ENCODE measurements at regions of chr6 and their contacts with region 1.

Region 1: GRCh38 chr6:111651185-111652034 is 45.7 kb upstream of the TRAF3IP2 start:
- DNase-seq: peak; percentile 93 to 95
- ATAC-seq: peak; percentile 76 to 79
- H3K4me3 ChIP-seq: no peak overlapping the region
- H3K27ac ChIP-seq: peak overlapping the region; percentile 86 to 95 (median 90)
- H3K4me1 ChIP-seq: peaks cover 37 to 56% of the 10 kb centered on the region in 2 donors
- H3K27me3 ChIP-seq: no peaks in the 10 kb centered on the region
- CTCF ChIP-seq: no peak
- POLR2A ChIP-seq: peak; percentile 62 to 86

Region 2: DNA sequence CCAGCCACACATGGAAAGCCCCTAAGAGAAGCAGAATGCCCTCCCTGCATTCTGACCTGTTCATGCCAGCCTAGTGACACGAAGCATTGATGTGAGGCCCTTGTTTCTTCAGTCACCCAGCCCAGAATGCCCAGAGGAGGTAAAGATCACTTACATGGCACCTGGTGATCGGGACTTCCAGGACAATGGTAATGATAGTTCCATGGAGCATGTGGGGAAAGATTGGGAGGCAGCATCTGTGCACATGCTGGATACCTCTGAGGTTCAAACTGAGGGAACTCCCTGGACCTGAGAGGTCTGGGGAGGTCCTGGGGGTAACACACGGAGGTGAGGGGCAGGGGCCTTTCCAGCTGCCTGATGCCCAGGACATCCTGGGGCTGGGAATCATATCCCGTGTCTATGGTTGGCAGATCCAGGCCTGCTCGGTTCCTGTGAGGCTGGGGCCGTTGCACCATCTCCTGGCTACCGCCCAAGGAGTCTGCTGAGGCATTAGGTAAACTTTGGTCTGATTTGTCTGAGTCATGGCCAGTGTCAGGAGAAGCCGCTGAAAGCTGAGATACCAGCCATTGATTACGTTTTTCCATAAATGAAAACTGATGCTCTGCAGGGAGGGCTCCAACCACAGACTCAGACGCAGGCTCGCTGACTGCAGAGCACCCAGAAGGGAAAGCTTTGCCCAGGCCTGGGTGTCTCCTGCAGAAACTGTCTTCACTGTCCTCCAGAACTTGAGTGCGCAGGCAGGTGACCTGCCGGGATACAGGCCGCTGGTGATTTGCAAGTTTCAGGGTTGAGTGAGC is 60.1 kb before region 1 on chr6:
- in situ Hi-C with region 1: no loop called
- intact Hi-C with region 1: loop called (anchors 2 kb)
- DNase-seq: peak; percentile 95 to 99
- ATAC-seq: peak; percentile 93 to 94
- H3K4me3 ChIP-seq: peak overlapping the region in 3 of 4 donors; percentile 8 to 35 (median 24)
- H3K27ac ChIP-seq: peak overlapping the region; percentile 92 to 95 (median 94)
- H3K4me1 ChIP-seq: peaks cover 52 to 56% of the 10 kb centered on the region in 2 donors
- H3K27me3 ChIP-seq: no peaks in the 10 kb centered on the region
- CTCF ChIP-seq: no peak
- POLR2A ChIP-seq: peak; percentile 57 to 68

Region 3: GRCh38 chr6:111691345-111692225 is 40.2 kb after region 1 on chr6:
- in situ Hi-C with region 1: no loop called
- intact Hi-C with region 1: loop called (anchors 1 kb)
- DNase-seq: peak; percentile 58 to 69
- ATAC-seq: peak; percentile 75 to 79
- H3K4me3 ChIP-seq: no peak overlapping the region
- H3K27ac ChIP-seq: peak overlapping the region; percentile 71 to 85 (median 78)
- H3K4me1 ChIP-seq: peaks cover 25 to 28% of the 10 kb centered on the region in 2 donors
- H3K27me3 ChIP-seq: no peaks in the 10 kb centered on the region
- CTCF ChIP-seq: no peak
- POLR2A ChIP-seq: peak; percentile 19 to 47